Heart left ventricle (tissue), 16 donors: ENCODE measurements at regions of chr17 and their contacts with region 1.

Region 1: GRCh38 chr17:19317359-19318095 is 45.0 kb downstream of the B9D1 start:
- DNase-seq: peak; percentile 87 to 94 (median 87)
- ATAC-seq: peak; percentile 88 to 96 (median 94)
- H3K4me3 ChIP-seq: no peak overlapping the region
- H3K27ac ChIP-seq: peak overlapping the region in 11 of 12 donors; percentile 27 to 73 (median 51)
- H3K4me1 ChIP-seq: peaks cover 0 to 65% (median 26%) of the 10 kb centered on the region in 12 donors
- H3K27me3 ChIP-seq: peaks cover 0 to 28% (median 0%) of the 10 kb centered on the region in 9 donors
- CTCF ChIP-seq: peak in 11 of 12 donors; percentile 12 to 64 (median 43)
- POLR2A ChIP-seq: no peak

Region 2: DNA sequence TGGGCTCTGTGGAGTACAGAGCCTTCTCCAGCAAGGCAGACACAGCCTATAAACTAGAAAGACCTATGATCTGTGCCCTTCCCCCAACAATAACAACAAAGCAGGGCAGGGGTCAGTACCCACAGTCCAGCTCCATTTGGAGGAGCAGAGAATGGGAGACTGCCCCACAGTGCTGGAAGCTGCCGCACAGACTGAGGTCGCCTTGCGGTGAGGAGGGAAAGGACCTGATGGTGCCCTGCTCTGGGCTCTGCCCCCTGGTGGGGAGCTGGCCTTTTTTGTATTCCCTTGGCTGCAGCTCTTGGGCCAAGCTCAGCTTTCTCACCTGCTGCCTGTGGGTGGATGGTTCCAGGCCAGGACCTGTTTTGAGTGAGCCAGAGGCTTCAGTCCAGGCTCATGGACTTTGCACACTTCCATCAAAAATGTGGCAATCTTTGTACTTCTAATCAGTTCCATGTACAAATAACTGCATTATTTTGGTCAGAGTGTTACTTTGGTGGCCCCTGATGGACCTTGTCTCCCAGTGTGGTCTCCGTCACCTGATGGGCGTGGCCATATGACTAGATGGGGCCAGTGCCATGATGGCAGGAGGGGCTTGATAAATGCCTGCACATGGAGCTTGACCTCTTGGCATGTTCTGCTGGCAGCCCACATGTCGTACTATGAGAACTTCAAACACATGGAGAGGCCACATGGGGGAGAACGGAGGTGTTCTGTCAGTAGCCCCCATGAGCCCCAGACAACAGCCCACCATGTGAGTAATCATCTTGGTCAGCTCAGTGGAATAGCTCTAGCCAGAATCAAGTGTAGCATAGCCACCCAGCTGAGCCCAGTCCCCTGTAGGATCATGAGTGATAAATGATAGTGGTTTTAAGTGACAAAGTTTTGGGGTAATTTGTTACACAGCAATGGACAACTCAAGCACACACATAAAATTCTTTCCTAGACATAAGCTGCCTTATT is 20.8 kb after region 1 on chr17:
- intact Hi-C with region 1: loop called in 1 of 10 experiments (anchors 1 kb)
- DNase-seq: peak; percentile 64 to 83 (median 74)
- ATAC-seq: peak; percentile 47 to 81 (median 66)
- H3K4me3 ChIP-seq: no peak overlapping the region
- H3K27ac ChIP-seq: peak overlapping the region in 5 of 12 donors; percentile 17 to 39 (median 31)
- H3K4me1 ChIP-seq: peaks cover 0 to 43% (median 12%) of the 10 kb centered on the region in 12 donors
- H3K27me3 ChIP-seq: no peaks in the 10 kb centered on the region
- CTCF ChIP-seq: peak; percentile 49 to 75 (median 68)
- POLR2A ChIP-seq: no peak